Ascending aorta (tissue), 2 donors: ENCODE measurements at regions of chr11 and their contacts with region 1.

Region 1: DNA sequence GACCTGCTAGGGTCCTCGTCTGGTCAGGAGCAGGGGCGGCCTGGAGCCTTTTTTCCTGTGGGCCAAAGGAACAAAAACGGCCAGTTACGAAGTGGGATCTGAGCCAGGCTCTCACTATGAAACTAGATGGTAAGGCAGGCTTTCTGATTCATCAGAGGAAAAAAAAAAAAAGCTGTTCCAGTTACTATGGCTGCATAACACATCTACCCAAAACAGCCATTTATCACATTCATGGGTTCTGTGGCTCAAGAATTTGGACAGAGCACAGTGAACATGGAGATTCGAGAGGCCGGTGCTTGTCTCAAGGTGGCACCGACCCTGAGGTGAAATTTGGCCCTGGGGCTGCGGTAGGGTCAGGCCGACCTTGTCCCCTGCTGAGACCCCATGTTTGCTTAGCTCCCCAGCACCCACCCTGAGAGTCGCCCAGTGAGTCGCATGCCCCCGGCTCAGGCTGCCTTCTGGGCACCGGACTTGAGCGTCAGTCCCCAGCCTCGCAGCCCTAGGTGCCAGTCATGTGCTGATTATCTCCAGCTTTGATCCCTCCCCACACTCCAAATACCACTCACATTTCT is 34.2 kb downstream of the MRGPRD start:
- DNase-seq: peak in 1 of 2 donors; percentile 82
- H3K4me3 ChIP-seq: peak overlapping the region; percentile 11 to 20
- H3K27ac ChIP-seq: peak overlapping the region; percentile 70 to 82
- H3K4me1 ChIP-seq: peaks cover 25 to 36% of the 10 kb centered on the region in 2 donors
- H3K27me3 ChIP-seq: no peaks in the 10 kb centered on the region
- CTCF ChIP-seq: no peak

Region 2: DNA sequence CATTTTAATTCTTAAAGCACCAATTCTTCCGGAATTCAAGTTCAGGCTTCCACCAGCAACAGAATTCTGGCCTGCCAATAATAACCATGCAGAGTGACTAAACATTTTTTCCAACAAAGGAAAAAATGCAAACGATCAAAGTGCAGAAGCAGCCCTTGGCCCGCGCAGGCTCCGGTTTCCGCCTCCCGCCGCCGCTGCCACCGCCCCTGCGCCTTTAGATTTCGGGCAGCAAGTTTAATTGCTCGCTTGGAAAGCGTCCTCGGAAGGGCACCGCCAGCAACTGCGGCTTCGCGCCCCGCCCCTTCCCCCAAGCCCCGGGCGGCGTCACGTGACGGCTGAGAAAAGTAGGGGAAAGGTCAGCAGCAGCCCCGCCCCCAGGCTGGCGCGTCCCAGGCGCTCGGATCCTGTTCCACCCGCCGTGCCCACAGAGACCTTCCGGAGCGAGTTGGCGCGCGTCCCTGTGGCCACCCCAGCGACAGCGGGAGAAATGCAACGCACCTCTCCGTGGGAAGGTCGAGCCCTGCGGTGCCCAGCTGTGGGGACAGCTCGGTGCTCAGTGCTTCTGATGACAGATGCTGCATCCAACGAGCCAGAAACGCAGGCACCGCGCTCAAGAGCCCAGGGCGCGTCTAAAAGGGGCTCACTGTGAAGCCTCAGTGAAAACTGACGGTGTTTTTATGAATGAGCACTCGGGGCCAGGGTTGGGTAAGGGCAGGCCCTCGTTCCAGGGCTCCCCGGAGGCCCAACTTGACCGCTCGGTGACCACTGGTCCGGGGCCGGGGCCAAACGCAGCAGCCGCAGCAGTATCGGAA is 107.3 kb before region 1 on chr11:
- intact Hi-C with region 1: loop called (anchors 5 kb)
- DNase-seq: peak; percentile 72 to 98
- H3K4me3 ChIP-seq: peak overlapping the region; percentile 87 to 94
- H3K27ac ChIP-seq: peak overlapping the region; percentile 95
- H3K4me1 ChIP-seq: peaks cover 19 to 68% of the 10 kb centered on the region in 2 donors
- H3K27me3 ChIP-seq: no peaks in the 10 kb centered on the region
- CTCF ChIP-seq: peak in 1 of 3 experiments; percentile 9

Region 3: GRCh38 chr11:68889948-68890446 is 56.6 kb before region 1 on chr11:
- intact Hi-C with region 1: loop called (anchors 5 kb)
- DNase-seq: peak in 1 of 2 donors; percentile 79
- H3K4me3 ChIP-seq: no peak overlapping the region
- H3K27ac ChIP-seq: peak overlapping the region; percentile 61 to 82
- H3K4me1 ChIP-seq: peaks cover 14 to 16% of the 10 kb centered on the region in 2 donors
- H3K27me3 ChIP-seq: no peaks in the 10 kb centered on the region
- CTCF ChIP-seq: peak; percentile 68 to 75 (median 72)

Region 4: GRCh38 chr11:68924073-68924945 is 22.2 kb before region 1 on chr11:
- intact Hi-C with region 1: loop called (anchors 2 kb)
- DNase-seq: no peak
- H3K4me3 ChIP-seq: no peak overlapping the region
- H3K27ac ChIP-seq: peak overlapping the region; percentile 70 to 78
- H3K4me1 ChIP-seq: peaks cover 15 to 33% of the 10 kb centered on the region in 2 donors
- H3K27me3 ChIP-seq: no peaks in the 10 kb centered on the region
- CTCF ChIP-seq: no peak

Region 5: GRCh38 chr11:69048718-69049489 is 102.4 kb after region 1 on chr11 and contains the start of gene TPCN2:
- intact Hi-C with region 1: loop called (anchors 5 kb)
- DNase-seq: peak; percentile 65 to 95
- H3K4me3 ChIP-seq: peak within 1 kb of the TSS; percentile 69 to 97
- H3K27ac ChIP-seq: peak within 1 kb of the TSS; percentile 74 to 93
- H3K4me1 ChIP-seq: peaks cover 6 to 23% of the 10 kb centered on the region in 2 donors
- H3K27me3 ChIP-seq: no peaks in the 10 kb centered on the region
- CTCF ChIP-seq: no peak
- total RNA-seq, gene TPCN2: 24.9 TPM

Region 6: GRCh38 chr11:69066122-69067112 is 119.9 kb after region 1 on chr11:
- intact Hi-C with region 1: no loop called
- DNase-seq: no peak
- H3K4me3 ChIP-seq: no peak overlapping the region
- H3K27ac ChIP-seq: no peak overlapping the region
- H3K4me1 ChIP-seq: no peaks in the 10 kb centered on the region
- H3K27me3 ChIP-seq: no peaks in the 10 kb centered on the region
- CTCF ChIP-seq: no peak

Region 7: DNA sequence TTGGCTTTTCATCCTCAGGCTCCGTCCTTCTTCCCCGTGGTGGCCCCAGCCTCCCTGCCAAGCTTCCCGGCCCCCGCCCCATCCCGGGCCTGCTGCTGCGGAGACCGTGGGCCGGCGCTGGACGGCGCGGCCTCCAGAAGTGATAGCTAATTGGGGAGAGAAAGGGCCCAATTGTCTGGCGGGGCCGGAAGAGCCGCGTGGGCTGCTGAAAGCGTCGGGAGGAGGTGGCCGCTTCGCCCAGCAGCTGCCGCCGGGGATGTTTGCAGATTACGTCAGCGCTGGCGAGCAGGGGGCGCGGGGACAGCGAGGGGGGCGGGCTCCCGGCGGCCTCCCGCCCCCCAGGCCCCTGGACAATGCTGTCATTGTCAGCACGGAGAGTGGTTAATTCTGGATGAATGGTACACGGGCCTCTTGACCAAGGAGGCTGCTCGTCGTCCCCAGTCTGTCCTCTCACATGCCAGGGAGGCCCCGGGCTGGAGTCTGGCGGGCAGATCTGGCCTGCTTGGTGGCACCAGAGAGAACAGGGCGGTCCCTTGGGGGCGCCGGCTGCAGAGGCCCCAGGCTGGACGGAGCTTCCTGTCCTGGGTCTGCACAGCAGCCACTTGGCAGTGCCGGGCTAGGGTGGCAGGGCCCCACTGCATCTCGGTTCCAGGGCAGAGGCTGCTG is 210.7 kb after region 1 on chr11:
- intact Hi-C with region 1: no loop called
- DNase-seq: no peak
- H3K4me3 ChIP-seq: peak overlapping the region in 1 of 2 donors; percentile 41
- H3K27ac ChIP-seq: peak overlapping the region; percentile 8 to 39
- H3K4me1 ChIP-seq: peaks cover 3 to 8% of the 10 kb centered on the region in 2 donors
- H3K27me3 ChIP-seq: no peaks in the 10 kb centered on the region
- CTCF ChIP-seq: no peak